CD4-positive, alpha-beta memory T cell (primary cell): ENCODE measurements at regions of chr19 and their contacts with region 1.

Region 1: GRCh38 chr19:16111160-16111908 is at the start of gene RAB8A:
- DNase-seq: peak; percentile 99 to 100 (median 99)
- H3K4me3 ChIP-seq: peak within 1 kb of the TSS; percentile 78 to 86
- H3K4me3 Mint-ChIP-seq: peak within 1 kb of the TSS; percentile 96 to 99 (median 98)
- H3K27ac ChIP-seq: peak within 1 kb of the TSS; percentile 94
- H3K27ac Mint-ChIP-seq: peak within 1 kb of the TSS; percentile 96 to 99 (median 98)
- H3K4me1 ChIP-seq: peaks cover 46% of the 10 kb centered on the region
- H3K4me1 Mint-ChIP-seq: peaks cover 20 to 50% (median 37%) of the 10 kb centered on the region in 4 donors
- H3K27me3 ChIP-seq: no peaks in the 10 kb centered on the region
- H3K27me3 Mint-ChIP-seq: no peaks in the 10 kb centered on the region
- total RNA-seq, gene RAB8A: 85.5 to 86.9 TPM

Region 2: GRCh38 chr19:15836595-15837337 is 274.6 kb before region 1 on chr19:
- CTCF ChIA-PET with region 1: no interaction called
- POLR2A ChIA-PET with region 1: interaction called, 3 read pairs
- intact Hi-C with region 1: loop called (anchors 1 kb)
- DNase-seq: peak; percentile 95 to 98 (median 96)
- H3K4me3 ChIP-seq: peak overlapping the region; percentile 63 to 69
- H3K4me3 Mint-ChIP-seq: peak overlapping the region; percentile 92 to 99 (median 96)
- H3K27ac ChIP-seq: peak overlapping the region; percentile 94
- H3K27ac Mint-ChIP-seq: peak overlapping the region; percentile 89 to 100 (median 98)
- H3K4me1 ChIP-seq: peaks cover 29% of the 10 kb centered on the region
- H3K4me1 Mint-ChIP-seq: peaks cover 17 to 36% (median 26%) of the 10 kb centered on the region in 4 donors
- H3K27me3 ChIP-seq: no peaks in the 10 kb centered on the region
- H3K27me3 Mint-ChIP-seq: no peaks in the 10 kb centered on the region

Region 3: GRCh38 chr19:16062789-16063188 is 48.5 kb before region 1 on chr19:
- CTCF ChIA-PET with region 1: interaction called, 84 read pairs
- POLR2A ChIA-PET with region 1: interaction called, 11 read pairs
- intact Hi-C with region 1: loop called (anchors 1 kb)
- DNase-seq: peak; percentile 62 to 73 (median 67)
- H3K4me3 ChIP-seq: no peak overlapping the region
- H3K4me3 Mint-ChIP-seq: no peak overlapping the region
- H3K27ac ChIP-seq: no peak overlapping the region
- H3K27ac Mint-ChIP-seq: peak overlapping the region in 4 of 7 donors; percentile 15 to 56 (median 34)
- H3K4me1 ChIP-seq: peaks cover 12% of the 10 kb centered on the region
- H3K4me1 Mint-ChIP-seq: peaks cover 13 to 22% (median 19%) of the 10 kb centered on the region in 4 donors
- H3K27me3 ChIP-seq: no peaks in the 10 kb centered on the region
- H3K27me3 Mint-ChIP-seq: no peaks in the 10 kb centered on the region

Region 4: GRCh38 chr19:16076154-16076957 is 35.0 kb before region 1 on chr19 and contains the start of gene TPM4:
- CTCF ChIA-PET with region 1: interaction called, 27 read pairs
- POLR2A ChIA-PET with region 1: interaction called, 49 read pairs
- intact Hi-C with region 1: loop called (anchors 1 kb)
- DNase-seq: peak; percentile 74 to 89 (median 76)
- H3K4me3 ChIP-seq: peak within 1 kb of the TSS; percentile 55 to 85
- H3K4me3 Mint-ChIP-seq: peak within 1 kb of the TSS; percentile 83 to 92 (median 91)
- H3K27ac ChIP-seq: peak within 1 kb of the TSS; percentile 91
- H3K27ac Mint-ChIP-seq: peak within 1 kb of the TSS; percentile 91 to 100 (median 99)
- H3K4me1 ChIP-seq: peaks cover 78% of the 10 kb centered on the region
- H3K4me1 Mint-ChIP-seq: peaks cover 42 to 83% (median 59%) of the 10 kb centered on the region in 4 donors
- H3K27me3 ChIP-seq: no peaks in the 10 kb centered on the region
- H3K27me3 Mint-ChIP-seq: no peaks in the 10 kb centered on the region
- total RNA-seq, gene TPM4: 94.7 to 96.8 TPM

Region 5: DNA sequence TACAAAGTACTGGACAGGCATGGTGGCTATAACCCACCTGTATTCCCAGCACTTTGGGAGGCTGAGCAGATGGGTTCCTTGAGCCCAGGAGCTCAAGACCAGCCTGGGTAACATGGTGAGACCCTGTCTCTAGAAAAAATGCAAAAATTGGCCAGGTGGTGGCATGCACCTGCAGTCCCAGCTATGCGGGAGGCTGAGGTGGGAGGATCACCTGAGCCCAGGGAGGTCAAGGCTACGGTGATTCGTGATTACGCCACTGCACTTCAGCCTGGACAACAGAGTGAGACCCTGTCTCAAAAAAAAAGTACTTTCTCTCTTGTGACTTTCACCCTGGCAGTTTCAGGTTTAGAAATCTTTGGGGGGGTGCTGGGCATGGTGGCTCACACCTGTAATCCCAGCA is 10.8 kb before region 1 on chr19:
- CTCF ChIA-PET with region 1: interaction called, 12 read pairs
- POLR2A ChIA-PET with region 1: interaction called, 4 read pairs
- intact Hi-C with region 1: no loop called
- DNase-seq: no peak
- H3K4me3 ChIP-seq: no peak overlapping the region
- H3K4me3 Mint-ChIP-seq: no peak overlapping the region
- H3K27ac ChIP-seq: no peak overlapping the region
- H3K27ac Mint-ChIP-seq: no peak overlapping the region
- H3K4me1 ChIP-seq: peaks cover 2% of the 10 kb centered on the region
- H3K4me1 Mint-ChIP-seq: peaks cover under 1 to 9% (median 7%) of the 10 kb centered on the region in 4 donors
- H3K27me3 ChIP-seq: no peaks in the 10 kb centered on the region
- H3K27me3 Mint-ChIP-seq: no peaks in the 10 kb centered on the region

Region 6: DNA sequence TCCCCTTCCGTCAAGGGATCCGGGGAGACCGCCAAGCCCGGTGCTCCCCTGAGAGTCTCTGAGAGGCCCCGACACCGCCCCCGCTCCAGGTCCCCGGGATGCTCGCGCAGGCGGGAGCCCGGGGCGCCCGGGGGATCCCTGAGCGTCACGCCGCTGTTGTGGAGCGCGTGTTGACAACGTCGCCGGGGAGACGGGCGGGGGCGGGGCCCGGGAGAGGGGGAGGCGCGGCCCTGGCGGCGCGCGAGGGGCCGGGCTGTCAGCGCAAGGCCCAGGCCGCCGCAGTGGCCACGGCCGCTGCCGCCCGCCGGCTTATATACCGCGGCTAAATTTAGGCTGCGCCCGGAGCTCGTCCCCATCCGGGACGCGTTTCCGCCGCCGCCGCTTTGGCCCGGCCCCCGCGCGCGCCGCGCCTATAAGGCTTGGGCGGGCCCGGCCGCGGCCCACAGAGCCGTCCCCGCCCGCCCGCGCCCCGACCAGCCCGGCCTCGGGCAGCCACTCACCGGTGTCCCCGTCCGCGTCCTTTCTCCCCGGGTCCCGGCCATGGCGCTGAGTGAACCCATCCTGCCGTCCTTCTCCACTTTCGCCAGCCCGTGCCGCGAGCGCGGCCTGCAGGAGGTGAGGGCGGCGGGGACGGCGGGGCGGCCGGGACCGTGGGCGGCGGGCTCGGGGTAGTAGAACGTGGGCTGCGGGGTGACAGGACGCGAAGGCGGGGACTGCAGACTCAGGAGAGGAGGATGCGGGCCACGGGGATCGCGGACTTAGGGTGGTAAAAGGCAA is 213.2 kb after region 1 on chr19 and contains the start of gene KLF2:
- CTCF ChIA-PET with region 1: no interaction called
- POLR2A ChIA-PET with region 1: interaction called, 4 read pairs
- intact Hi-C with region 1: loop called (anchors 1 kb)
- DNase-seq: peak; percentile 95 to 98 (median 96)
- H3K4me3 ChIP-seq: peak within 1 kb of the TSS; percentile 38 to 100
- H3K4me3 Mint-ChIP-seq: peak within 1 kb of the TSS; percentile 79 to 87 (median 83)
- H3K27ac ChIP-seq: peak within 1 kb of the TSS; percentile 95
- H3K27ac Mint-ChIP-seq: peak within 1 kb of the TSS; percentile 96 to 99 (median 98)
- H3K4me1 ChIP-seq: peaks cover 34% of the 10 kb centered on the region
- H3K4me1 Mint-ChIP-seq: peaks cover 15 to 64% (median 31%) of the 10 kb centered on the region in 4 donors
- H3K27me3 ChIP-seq: no peaks in the 10 kb centered on the region
- H3K27me3 Mint-ChIP-seq: peaks cover 0 to 7% of the 10 kb centered on the region in 2 donors
- total RNA-seq, gene KLF2: 425 to 437 TPM